PC-9 (cell line): ENCODE measurements at regions of chr7 and their contacts with region 1.

Region 1: DNA sequence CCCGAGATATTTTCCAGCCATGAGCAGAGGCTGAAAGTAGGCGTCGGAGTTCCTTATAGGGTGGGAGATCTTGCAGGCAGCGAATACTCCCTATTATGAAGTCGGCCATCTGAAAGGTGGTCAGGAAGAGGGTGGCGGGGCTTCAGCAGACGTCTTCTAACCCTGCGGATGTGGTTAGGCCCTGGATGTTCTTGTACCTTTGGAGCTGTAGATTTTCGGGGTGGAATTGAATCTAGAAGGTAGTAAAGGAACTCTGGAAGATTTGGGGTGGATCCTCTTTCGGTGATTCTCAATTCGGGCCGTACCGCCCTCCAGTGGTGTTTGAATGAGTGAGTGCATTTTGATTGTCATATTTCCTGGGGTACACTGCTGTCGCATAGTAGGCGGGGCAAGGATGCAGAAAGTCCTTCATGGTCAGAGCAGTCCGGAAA is 635 bp downstream of the NUP205 start:
- DNase-seq: peak; percentile 70
- H3K4me3 ChIP-seq: peak overlapping the region; percentile 85
- H3K27ac ChIP-seq: peak overlapping the region; percentile 91
- H3K4me1 ChIP-seq: peaks cover 6% of the 10 kb centered on the region
- H3K27me3 ChIP-seq: no peaks in the 10 kb centered on the region
- CTCF ChIP-seq: peak; percentile 70

Region 2: DNA sequence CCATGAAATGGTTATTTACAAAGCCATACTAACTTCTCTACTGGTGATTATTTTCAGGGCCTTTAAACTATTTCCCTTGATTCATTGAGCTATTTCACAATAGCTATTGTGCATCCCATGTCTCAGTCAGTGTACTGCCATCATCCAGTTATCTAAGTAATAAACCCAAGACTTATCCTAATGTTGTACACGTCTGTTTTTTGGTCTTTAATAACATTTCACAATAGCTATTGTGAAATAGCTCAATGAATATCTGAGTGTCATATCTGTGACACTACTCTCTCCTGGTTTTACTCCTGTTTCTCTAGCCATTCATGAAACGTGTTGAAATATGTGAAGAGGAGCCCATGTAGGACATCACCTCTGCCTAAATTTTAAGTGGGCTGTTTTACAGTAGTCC is 447.0 kb before region 1 on chr7:
- CTCF ChIA-PET with region 1: no interaction called
- POLR2A ChIA-PET with region 1: no interaction called
- intact Hi-C with region 1: no loop called
- DNase-seq: no peak
- H3K4me3 ChIP-seq: no peak overlapping the region
- H3K27ac ChIP-seq: no peak overlapping the region
- H3K4me1 ChIP-seq: no peaks in the 10 kb centered on the region
- H3K27me3 ChIP-seq: 0 out of 2 replicates have a peak, but pooled peaks cover 11% of the 10 kb centered on the region
- CTCF ChIP-seq: no peak

Region 3: DNA sequence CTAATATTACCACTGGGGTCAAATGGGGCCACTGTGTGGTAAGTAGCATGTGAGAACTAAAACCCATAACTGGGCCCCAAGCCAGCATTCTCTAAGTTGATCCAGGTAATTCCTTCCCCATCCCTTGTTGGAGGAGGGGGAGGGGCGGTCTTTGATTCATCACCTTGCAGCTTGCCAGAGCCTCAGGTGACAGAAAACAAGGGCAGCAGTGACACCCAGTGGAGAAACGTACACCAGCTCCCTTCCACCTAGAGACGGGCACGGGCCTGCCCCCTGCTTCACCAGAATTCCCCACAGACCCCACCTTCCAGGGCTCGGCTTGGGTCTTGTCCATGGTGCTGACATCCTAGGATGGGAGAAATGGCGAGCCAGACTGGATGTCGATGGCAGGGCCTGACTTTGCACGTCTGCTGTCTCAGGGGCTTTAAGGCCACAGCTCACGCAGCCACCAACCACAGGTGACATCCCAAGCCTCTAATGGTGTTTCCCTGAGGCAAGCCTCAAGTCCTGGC is 222.7 kb before region 1 on chr7:
- CTCF ChIA-PET with region 1: no interaction called
- POLR2A ChIA-PET with region 1: no interaction called
- intact Hi-C with region 1: loop called (anchors 5 kb)
- DNase-seq: peak; percentile 73 to 87
- H3K4me3 ChIP-seq: no peak overlapping the region
- H3K27ac ChIP-seq: no peak overlapping the region
- H3K4me1 ChIP-seq: no peaks in the 10 kb centered on the region
- H3K27me3 ChIP-seq: peaks cover 10% of the 10 kb centered on the region; the same call in 1 of the 2 replicates
- CTCF ChIP-seq: peak; percentile 88

Region 4: DNA sequence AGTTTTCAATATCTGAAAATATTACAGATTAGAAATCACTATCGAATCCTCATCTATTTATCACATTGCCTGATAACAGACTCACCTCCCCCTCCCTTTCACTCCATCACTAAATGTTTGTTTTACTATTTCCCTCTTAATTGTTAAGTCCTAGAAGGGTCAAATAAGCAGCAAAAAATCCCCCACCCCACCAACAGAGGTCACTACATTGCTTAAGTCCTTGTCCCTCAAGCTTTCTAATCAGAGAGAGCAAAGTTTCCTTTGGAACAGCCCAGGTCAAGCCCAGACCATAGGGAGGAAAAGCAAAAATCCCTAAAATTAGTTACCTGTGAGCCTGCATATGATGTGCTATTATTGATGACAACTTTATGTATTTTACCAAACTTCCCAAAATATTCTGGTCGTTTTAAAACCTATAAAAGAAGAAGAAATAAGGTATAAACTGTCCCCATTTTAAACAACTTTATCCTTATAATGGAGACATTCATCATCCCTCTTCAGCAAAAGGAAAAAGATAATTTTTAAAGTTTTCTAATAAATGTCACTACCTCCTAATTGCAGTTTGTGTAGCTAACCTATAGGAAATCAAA is 143.4 kb before region 1 on chr7:
- CTCF ChIA-PET with region 1: no interaction called
- POLR2A ChIA-PET with region 1: no interaction called
- intact Hi-C with region 1: loop called (anchors 2 kb)
- DNase-seq: peak; percentile 29 to 61
- H3K4me3 ChIP-seq: no peak overlapping the region
- H3K27ac ChIP-seq: no peak overlapping the region
- H3K4me1 ChIP-seq: no peaks in the 10 kb centered on the region
- H3K27me3 ChIP-seq: no peaks in the 10 kb centered on the region
- CTCF ChIP-seq: peak; percentile 79